Esophagus muscularis mucosa (tissue), 4 donors: ENCODE measurements at regions of chr15 and their contacts with region 1.

Region 1: GRCh38 chr15:93649691-93650235 is 560.8 kb upstream of the RGMA start:
- DNase-seq: peak; percentile 90
- H3K4me3 ChIP-seq: no peak overlapping the region
- H3K27ac ChIP-seq: no peak overlapping the region
- H3K4me1 ChIP-seq: no peaks in the 10 kb centered on the region
- H3K27me3 ChIP-seq: no peaks in the 10 kb centered on the region
- CTCF ChIP-seq: no peak
- EP300 ChIP-seq: no peak
- POLR2A ChIP-seq: no peak

Region 2: GRCh38 chr15:93587059-93587521 is 62.7 kb before region 1 on chr15:
- intact Hi-C with region 1: loop called (anchors 10 kb)
- DNase-seq: no peak
- H3K4me3 ChIP-seq: no peak overlapping the region
- H3K27ac ChIP-seq: no peak overlapping the region
- H3K4me1 ChIP-seq: no peaks in the 10 kb centered on the region
- H3K27me3 ChIP-seq: no peaks in the 10 kb centered on the region
- CTCF ChIP-seq: no peak
- EP300 ChIP-seq: no peak
- POLR2A ChIP-seq: no peak

Region 3: GRCh38 chr15:93683651-93684050 is 33.9 kb after region 1 on chr15:
- intact Hi-C with region 1: no loop called
- DNase-seq: no peak
- H3K4me3 ChIP-seq: no peak overlapping the region
- H3K27ac ChIP-seq: no peak overlapping the region
- H3K4me1 ChIP-seq: no peaks in the 10 kb centered on the region
- H3K27me3 ChIP-seq: no peaks in the 10 kb centered on the region
- CTCF ChIP-seq: no peak
- EP300 ChIP-seq: no peak
- POLR2A ChIP-seq: no peak